WTC11 (cell line): ENCODE measurements at regions of chr9 and their contacts with region 1.

Region 1: DNA sequence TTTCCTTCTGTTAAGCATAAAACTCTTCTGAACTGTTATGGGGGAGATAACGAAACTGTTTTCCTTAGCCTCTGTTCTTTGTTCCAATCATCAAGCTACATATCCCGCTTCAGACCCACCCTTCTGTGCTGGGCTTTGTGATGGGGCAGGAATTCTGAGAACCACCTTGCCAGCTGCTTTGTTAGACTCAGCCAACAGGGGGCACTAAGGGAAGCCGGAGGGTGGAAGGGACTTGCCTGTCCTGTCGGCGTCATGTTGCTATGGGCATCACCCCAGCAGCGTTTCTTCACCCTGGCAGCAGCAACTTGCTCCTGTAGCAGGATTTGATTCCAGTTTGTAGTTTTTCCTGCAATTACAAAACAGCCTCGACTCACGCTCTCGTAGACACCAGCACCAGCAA is 169.1 kb downstream of the CAAP1 start:
- DNase-seq: peak; percentile 90
- ATAC-seq: peak; percentile 100
- H3K4me3 Mint-ChIP-seq: peak overlapping the region; percentile 22
- H3K27ac Mint-ChIP-seq: no peak overlapping the region
- H3K4me1 Mint-ChIP-seq: peaks cover 18% of the 10 kb centered on the region
- H3K27me3 Mint-ChIP-seq: peaks cover 17% of the 10 kb centered on the region
- CTCF ChIP-seq: peak; percentile 55

Region 2: GRCh38 chr9:26643826-26644225 is 79.7 kb before region 1 on chr9:
- CTCF ChIA-PET with region 1: no interaction called
- POLR2A ChIA-PET with region 1: no interaction called
- DNase-seq: no peak
- ATAC-seq: no peak
- H3K4me3 Mint-ChIP-seq: no peak overlapping the region
- H3K27ac Mint-ChIP-seq: no peak overlapping the region
- H3K4me1 Mint-ChIP-seq: peaks cover 7% of the 10 kb centered on the region
- H3K27me3 Mint-ChIP-seq: peaks cover 30% of the 10 kb centered on the region
- CTCF ChIP-seq: no peak

Region 3: DNA sequence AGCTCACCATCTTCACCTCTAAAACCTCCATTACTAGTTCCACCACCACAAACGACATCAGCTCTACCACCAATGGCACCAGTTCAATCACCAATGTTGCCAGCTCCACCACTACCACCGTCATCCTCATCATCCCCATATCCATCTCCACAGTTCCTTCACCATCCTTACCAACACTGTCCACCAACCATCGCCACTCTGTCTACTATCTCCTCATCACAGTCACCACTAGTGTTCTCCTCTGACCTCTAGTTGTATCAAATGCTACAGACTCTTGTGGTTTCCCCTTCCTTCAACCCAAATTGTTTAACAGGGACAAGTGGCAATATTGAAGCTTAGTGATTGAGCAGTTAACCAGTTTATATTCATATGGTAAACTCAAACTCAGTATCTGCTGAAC is 13.5 kb before region 1 on chr9:
- CTCF ChIA-PET with region 1: interaction called, 19 read pairs
- POLR2A ChIA-PET with region 1: no interaction called
- DNase-seq: no peak
- ATAC-seq: no peak
- H3K4me3 Mint-ChIP-seq: no peak overlapping the region
- H3K27ac Mint-ChIP-seq: no peak overlapping the region
- H3K4me1 Mint-ChIP-seq: peaks cover 5% of the 10 kb centered on the region
- H3K27me3 Mint-ChIP-seq: no peaks in the 10 kb centered on the region; the same call in none of the 2 replicates
- CTCF ChIP-seq: no peak

Region 4: GRCh38 chr9:26800322-26800721 is 76.8 kb after region 1 on chr9:
- CTCF ChIA-PET with region 1: interaction called, 16 read pairs
- POLR2A ChIA-PET with region 1: no interaction called
- DNase-seq: no peak
- ATAC-seq: no peak
- H3K4me3 Mint-ChIP-seq: no peak overlapping the region
- H3K27ac Mint-ChIP-seq: no peak overlapping the region
- H3K4me1 Mint-ChIP-seq: peaks cover 23% of the 10 kb centered on the region
- H3K27me3 Mint-ChIP-seq: no peaks in the 10 kb centered on the region
- CTCF ChIP-seq: no peak

Region 5: GRCh38 chr9:26856413-26857032 is 133.0 kb after region 1 on chr9:
- CTCF ChIA-PET with region 1: interaction called, 34 read pairs
- POLR2A ChIA-PET with region 1: interaction called, 6 read pairs
- DNase-seq: peak; percentile 46
- ATAC-seq: peak; percentile 81
- H3K4me3 Mint-ChIP-seq: no peak overlapping the region
- H3K27ac Mint-ChIP-seq: no peak overlapping the region
- H3K4me1 Mint-ChIP-seq: no peaks in the 10 kb centered on the region
- H3K27me3 Mint-ChIP-seq: no peaks in the 10 kb centered on the region
- CTCF ChIP-seq: peak; percentile 48

Region 6: GRCh38 chr9:26863074-26863473 is 139.6 kb after region 1 on chr9:
- CTCF ChIA-PET with region 1: interaction called, 10 read pairs
- POLR2A ChIA-PET with region 1: no interaction called
- DNase-seq: no peak
- ATAC-seq: no peak
- H3K4me3 Mint-ChIP-seq: no peak overlapping the region
- H3K27ac Mint-ChIP-seq: no peak overlapping the region
- H3K4me1 Mint-ChIP-seq: peaks cover 2% of the 10 kb centered on the region; the same call in 1 of the 2 replicates
- H3K27me3 Mint-ChIP-seq: no peaks in the 10 kb centered on the region
- CTCF ChIP-seq: no peak